Left ventricle myocardium superior (tissue), 1 donor: ENCODE measurements at regions of chr9 and their contacts with region 1.

Region 1: GRCh38 chr9:128863647-128864046 is 18.1 kb downstream of the KYAT1 start:
- DNase-seq: peak; percentile 86
- ATAC-seq: peak; percentile 84

Region 2: GRCh38 chr9:128927731-128928411 is 64.2 kb after region 1 on chr9:
- intact Hi-C with region 1: loop called (anchors 5 kb)
- DNase-seq: peak; percentile 68
- ATAC-seq: peak; percentile 76